ENCODE measurements at regions of chr7 and their contacts with region 1.

Region 1: GRCh38 chr7:120987683-120988590 is 574 bp upstream of the CPED1 start:
- DNase-seq: peak; percentile 89 to 95 (median 93)
- ATAC-seq: peak; percentile 86 to 87 (median 87)
- H3K4me3 ChIP-seq: peak overlapping the region; percentile 22 to 70 (median 64)
- H3K27ac ChIP-seq: peak overlapping the region; percentile 84 to 96 (median 90)
- H3K4me1 ChIP-seq: peaks cover 0 to 45% (median 9%) of the 10 kb centered on the region in 12 donors
- H3K27me3 ChIP-seq: peaks cover 0 to 3% (median 0%) of the 10 kb centered on the region in 9 donors
- CTCF ChIP-seq: peak; percentile 90 to 100 (median 98)
- POLR2A ChIP-seq: peak in 1 of 2 donors; percentile 26

Region 2: GRCh38 chr7:121041516-121042148 is 53.7 kb after region 1 on chr7:
- intact Hi-C with region 1: loop called in 1 of 10 experiments (anchors 5 kb)
- DNase-seq: no peak
- ATAC-seq: peak in 2 of 4 donors; percentile 49 to 65
- H3K4me3 ChIP-seq: peak overlapping the region in 3 of 12 donors; percentile 1 to 5 (median 3)
- H3K27ac ChIP-seq: peak overlapping the region in 10 of 12 donors; percentile 28 to 72 (median 58)
- H3K4me1 ChIP-seq: peaks cover 0 to 63% (median 31%) of the 10 kb centered on the region in 12 donors
- H3K27me3 ChIP-seq: no peaks in the 10 kb centered on the region
- CTCF ChIP-seq: no peak
- POLR2A ChIP-seq: no peak

Region 3: GRCh38 chr7:121081327-121081936 is 93.5 kb after region 1 on chr7:
- intact Hi-C with region 1: loop called (anchors 1 to 5 kb)
- DNase-seq: no peak
- ATAC-seq: peak in 3 of 4 donors; percentile 36 to 62 (median 62)
- H3K4me3 ChIP-seq: no peak overlapping the region
- H3K27ac ChIP-seq: peak overlapping the region in 8 of 12 donors; percentile 13 to 83 (median 46)
- H3K4me1 ChIP-seq: peaks cover 0 to 53% (median 29%) of the 10 kb centered on the region in 12 donors
- H3K27me3 ChIP-seq: no peaks in the 10 kb centered on the region
- CTCF ChIP-seq: peak; percentile 64 to 81 (median 76)
- POLR2A ChIP-seq: no peak

Region 4: GRCh38 chr7:121107923-121108498 is 120.1 kb after region 1 on chr7:
- intact Hi-C with region 1: loop called (anchors 1 to 5 kb)
- DNase-seq: no peak
- ATAC-seq: peak; percentile 51 to 84 (median 76)
- H3K4me3 ChIP-seq: no peak overlapping the region
- H3K27ac ChIP-seq: no peak overlapping the region
- H3K4me1 ChIP-seq: peaks cover 0 to 24% (median 7%) of the 10 kb centered on the region in 12 donors
- H3K27me3 ChIP-seq: no peaks in the 10 kb centered on the region
- CTCF ChIP-seq: peak; percentile 70 to 91 (median 84)
- POLR2A ChIP-seq: no peak